Naive thymus-derived CD4-positive, alpha-beta T cell (primary cell): ENCODE measurements at regions of chr3 and their contacts with region 1.

Region 1: DNA sequence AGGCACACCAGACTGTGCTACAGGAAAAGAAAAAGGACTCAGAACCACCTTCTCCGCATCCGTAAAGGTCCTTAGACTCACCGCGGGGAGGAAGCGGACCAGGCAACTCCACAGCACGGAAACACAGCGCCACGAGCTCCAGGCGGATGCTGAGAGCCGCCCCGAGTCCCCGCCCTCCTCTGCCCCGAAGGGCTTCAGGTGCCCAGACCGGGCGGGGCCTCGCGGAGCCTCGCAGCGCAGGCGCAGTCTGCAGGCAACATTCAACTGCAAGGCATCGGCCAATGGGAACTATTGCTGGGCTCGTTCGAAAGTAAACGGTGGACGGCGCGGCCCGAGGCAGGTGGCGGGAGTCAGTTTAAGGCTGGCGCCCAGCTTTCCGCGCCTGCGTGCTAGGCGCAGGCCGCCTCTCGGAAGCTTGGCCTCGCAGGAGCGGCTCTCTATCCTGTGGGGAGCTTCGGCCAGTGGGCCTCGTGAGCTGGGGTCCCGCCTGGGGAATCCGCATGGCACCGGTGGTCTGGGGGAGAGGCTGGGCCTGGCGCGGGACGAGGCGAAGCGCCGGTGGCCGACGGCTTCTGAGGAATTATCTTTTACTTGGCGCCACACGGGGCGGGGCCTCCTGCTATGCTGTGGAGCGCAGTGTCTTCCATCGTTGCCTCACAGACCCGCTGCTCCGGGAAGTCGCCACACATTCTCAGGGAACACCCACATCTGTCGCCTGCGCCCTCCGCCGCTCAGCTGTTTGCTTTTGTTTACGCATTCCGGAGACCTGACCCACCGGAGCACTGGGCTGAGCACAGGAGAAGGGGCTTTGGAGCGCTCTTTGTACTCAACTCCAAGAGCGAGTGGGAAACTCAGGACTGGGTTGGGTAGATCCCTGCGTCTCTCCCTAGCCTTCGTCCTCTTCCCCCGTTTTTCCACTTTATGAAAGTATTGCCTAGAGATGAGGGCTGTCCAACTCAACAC is at the start of gene TRIM59:
- DNase-seq: peak; percentile 90 to 96 (median 93)
- ATAC-seq: peak; percentile 97
- H3K4me3 ChIP-seq: peak within 1 kb of the TSS; percentile 90
- H3K4me3 Mint-ChIP-seq: peak within 1 kb of the TSS; percentile 92 to 100 (median 96)
- H3K27ac ChIP-seq: peak within 1 kb of the TSS; percentile 74
- H3K27ac Mint-ChIP-seq: peak within 1 kb of the TSS; percentile 88 to 96 (median 92)
- H3K4me1 ChIP-seq: peaks cover 10 to 14% of the 10 kb centered on the region in 2 donors
- H3K4me1 Mint-ChIP-seq: peaks cover 8 to 47% (median 40%) of the 10 kb centered on the region in 7 donors
- H3K27me3 ChIP-seq: no peaks in the 10 kb centered on the region
- H3K27me3 Mint-ChIP-seq: peaks cover 0 to 8% (median 0%) of the 10 kb centered on the region in 5 donors
- total RNA-seq, gene TRIM59: 9.8 to 49.2 (median 17.5) TPM

Region 2: DNA sequence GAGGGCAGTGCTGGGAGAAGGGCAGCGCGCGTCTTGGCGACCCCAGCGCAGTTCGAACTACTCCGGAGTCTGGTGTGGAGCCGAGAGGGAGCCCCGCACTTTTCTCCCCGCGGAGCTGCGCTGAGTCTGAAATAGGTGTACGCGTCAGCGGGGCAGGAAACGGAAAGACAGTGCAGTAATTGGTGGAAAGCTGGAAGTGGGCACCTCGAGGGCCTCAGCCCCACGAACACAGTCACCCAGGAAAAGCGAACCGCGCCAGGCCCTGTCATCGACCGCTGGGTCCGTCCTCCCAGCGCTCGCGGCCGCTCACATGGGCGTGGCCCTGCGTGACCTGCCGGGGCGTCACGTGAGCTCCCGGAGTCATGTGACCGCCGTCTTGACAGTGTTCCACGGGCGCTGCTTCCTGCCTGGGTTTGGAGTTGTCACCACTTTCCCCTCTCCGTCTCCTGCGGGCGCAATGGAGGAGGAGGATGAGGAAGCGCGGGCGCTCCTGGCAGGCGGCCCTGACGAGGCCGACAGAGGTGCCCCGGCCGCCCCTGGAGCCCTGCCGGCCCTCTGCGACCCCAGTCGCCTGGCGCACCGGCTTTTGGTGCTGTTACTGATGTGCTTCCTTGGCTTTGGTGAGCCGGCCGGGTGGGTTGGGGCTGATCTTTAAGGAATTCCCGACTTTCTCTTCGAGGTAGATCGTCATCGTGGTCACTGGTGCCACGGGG is 1648.1 kb before region 1 on chr3 and contains the start of gene MFSD1:
- CTCF ChIA-PET with region 1: no interaction called
- POLR2A ChIA-PET with region 1: no interaction called
- intact Hi-C with region 1: loop called in 1 of 2 experiments (anchors 2 kb)
- DNase-seq: peak; percentile 73 to 91 (median 83)
- ATAC-seq: peak; percentile 94
- H3K4me3 ChIP-seq: peak within 1 kb of the TSS; percentile 88
- H3K4me3 Mint-ChIP-seq: peak within 1 kb of the TSS; percentile 84 to 93 (median 90)
- H3K27ac ChIP-seq: peak within 1 kb of the TSS; percentile 76
- H3K27ac Mint-ChIP-seq: peak within 1 kb of the TSS; percentile 58 to 98 (median 92)
- H3K4me1 ChIP-seq: peaks cover 9 to 11% of the 10 kb centered on the region in 2 donors
- H3K4me1 Mint-ChIP-seq: peaks cover 24 to 50% (median 43%) of the 10 kb centered on the region in 7 donors
- H3K27me3 ChIP-seq: no peaks in the 10 kb centered on the region
- H3K27me3 Mint-ChIP-seq: peaks cover 0 to 24% (median 0%) of the 10 kb centered on the region in 5 donors
- total RNA-seq, gene MFSD1: 24.6 to 66.0 (median 31.1) TPM

Region 3: DNA sequence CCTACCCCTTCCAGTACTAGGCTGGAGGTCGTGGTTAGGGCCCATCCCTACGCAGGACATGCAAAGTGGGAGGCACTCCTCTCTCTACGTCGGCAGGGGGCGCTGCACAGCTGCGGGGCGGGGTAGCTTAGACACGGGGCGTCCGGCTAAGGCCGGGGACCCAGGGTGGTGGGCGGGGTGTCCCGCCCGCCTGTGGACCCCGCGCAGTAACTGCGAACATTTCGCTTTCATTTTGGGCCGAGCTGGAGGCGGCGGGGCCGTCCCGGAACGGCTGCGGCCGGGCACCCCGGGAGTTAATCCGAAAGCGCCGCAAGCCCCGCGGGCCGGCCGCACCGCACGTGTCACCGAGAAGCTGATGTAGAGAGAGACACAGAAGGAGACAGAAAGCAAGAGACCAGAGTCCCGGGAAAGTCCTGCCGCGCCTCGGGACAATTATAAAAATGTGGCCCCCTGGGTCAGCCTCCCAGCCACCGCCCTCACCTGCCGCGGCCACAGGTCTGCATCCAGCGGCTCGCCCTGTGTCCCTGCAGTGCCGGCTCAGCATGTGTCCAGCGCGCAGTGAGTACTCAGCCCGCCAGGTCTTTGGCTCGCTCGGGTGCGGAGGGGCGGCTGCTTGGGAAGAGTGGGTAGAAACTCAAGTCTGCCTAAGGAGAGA is 461.2 kb before region 1 on chr3 and contains the start of gene IL12A:
- CTCF ChIA-PET with region 1: no interaction called
- POLR2A ChIA-PET with region 1: no interaction called
- intact Hi-C with region 1: loop called in 1 of 2 experiments (anchors 2 kb)
- DNase-seq: peak; percentile 59 to 85 (median 75)
- ATAC-seq: peak; percentile 98
- H3K4me3 ChIP-seq: peak within 1 kb of the TSS; percentile 56
- H3K4me3 Mint-ChIP-seq: peak within 1 kb of the TSS; percentile 82 to 89 (median 84)
- H3K27ac ChIP-seq: peak within 1 kb of the TSS; percentile 32
- H3K27ac Mint-ChIP-seq: peak within 1 kb of the TSS in 5 of 9 donors; percentile 58 to 65 (median 62)
- H3K4me1 ChIP-seq: peaks cover 6 to 9% of the 10 kb centered on the region in 2 donors
- H3K4me1 Mint-ChIP-seq: peaks cover 6 to 33% (median 15%) of the 10 kb centered on the region in 7 donors
- H3K27me3 ChIP-seq: no peaks in the 10 kb centered on the region
- H3K27me3 Mint-ChIP-seq: peaks cover 0 to 24% (median 10%) of the 10 kb centered on the region in 5 donors
- total RNA-seq, gene IL12A: 0.40 to 1.8 (median 1.3) TPM

Region 4: DNA sequence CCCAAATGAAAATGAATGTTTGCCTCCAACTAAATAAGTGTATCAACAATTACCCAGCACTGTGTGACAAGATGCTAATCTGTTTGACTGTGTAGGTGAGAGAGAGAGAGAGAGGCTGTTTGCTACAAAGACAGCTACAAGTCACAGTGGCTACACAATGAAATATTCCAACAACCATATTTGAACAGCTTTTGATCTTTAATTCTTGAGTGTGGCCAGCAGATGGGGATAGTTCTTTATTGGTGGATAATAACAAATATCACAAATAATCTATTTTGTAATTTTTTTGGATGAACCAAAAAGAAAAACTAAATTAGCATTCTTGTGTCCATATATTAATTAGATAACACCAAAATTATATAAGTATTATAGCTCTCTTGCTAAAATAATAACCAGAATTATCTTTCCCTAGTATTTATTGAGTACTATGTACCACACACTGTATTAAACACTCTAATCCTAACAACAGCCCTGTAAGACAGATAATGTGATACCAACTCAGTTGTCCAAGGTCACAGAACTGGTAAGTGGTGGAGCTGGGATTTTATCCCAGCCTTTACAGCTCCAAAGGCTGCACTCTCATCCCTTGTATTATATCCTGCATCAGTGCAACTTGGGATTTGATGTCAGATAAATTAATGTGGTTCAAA is 286.6 kb before region 1 on chr3:
- CTCF ChIA-PET with region 1: no interaction called
- POLR2A ChIA-PET with region 1: no interaction called
- intact Hi-C with region 1: no loop called
- DNase-seq: peak in 4 of 9 donors; percentile 1 to 19 (median 7)
- ATAC-seq: no peak
- H3K4me3 ChIP-seq: no peak overlapping the region
- H3K4me3 Mint-ChIP-seq: no peak overlapping the region
- H3K27ac ChIP-seq: no peak overlapping the region
- H3K27ac Mint-ChIP-seq: no peak overlapping the region
- H3K4me1 ChIP-seq: no peaks in the 10 kb centered on the region
- H3K4me1 Mint-ChIP-seq: peaks cover 0 to 3% (median 0%) of the 10 kb centered on the region in 7 donors
- H3K27me3 ChIP-seq: no peaks in the 10 kb centered on the region
- H3K27me3 Mint-ChIP-seq: peaks cover 0 to 33% (median 17%) of the 10 kb centered on the region in 5 donors

Region 5: GRCh38 chr3:160434071-160434470 is 15.8 kb before region 1 on chr3:
- CTCF ChIA-PET with region 1: interaction called, 4 read pairs
- POLR2A ChIA-PET with region 1: interaction called, 6 read pairs
- intact Hi-C with region 1: loop called in 1 of 2 experiments (anchors 2 kb)
- DNase-seq: no peak
- ATAC-seq: no peak
- H3K4me3 ChIP-seq: no peak overlapping the region
- H3K4me3 Mint-ChIP-seq: no peak overlapping the region
- H3K27ac ChIP-seq: no peak overlapping the region
- H3K27ac Mint-ChIP-seq: no peak overlapping the region
- H3K4me1 ChIP-seq: peaks cover 0 to 5% of the 10 kb centered on the region in 2 donors
- H3K4me1 Mint-ChIP-seq: peaks cover 20 to 42% (median 33%) of the 10 kb centered on the region in 7 donors
- H3K27me3 ChIP-seq: no peaks in the 10 kb centered on the region
- H3K27me3 Mint-ChIP-seq: no peaks in the 10 kb centered on the region

Region 6: DNA sequence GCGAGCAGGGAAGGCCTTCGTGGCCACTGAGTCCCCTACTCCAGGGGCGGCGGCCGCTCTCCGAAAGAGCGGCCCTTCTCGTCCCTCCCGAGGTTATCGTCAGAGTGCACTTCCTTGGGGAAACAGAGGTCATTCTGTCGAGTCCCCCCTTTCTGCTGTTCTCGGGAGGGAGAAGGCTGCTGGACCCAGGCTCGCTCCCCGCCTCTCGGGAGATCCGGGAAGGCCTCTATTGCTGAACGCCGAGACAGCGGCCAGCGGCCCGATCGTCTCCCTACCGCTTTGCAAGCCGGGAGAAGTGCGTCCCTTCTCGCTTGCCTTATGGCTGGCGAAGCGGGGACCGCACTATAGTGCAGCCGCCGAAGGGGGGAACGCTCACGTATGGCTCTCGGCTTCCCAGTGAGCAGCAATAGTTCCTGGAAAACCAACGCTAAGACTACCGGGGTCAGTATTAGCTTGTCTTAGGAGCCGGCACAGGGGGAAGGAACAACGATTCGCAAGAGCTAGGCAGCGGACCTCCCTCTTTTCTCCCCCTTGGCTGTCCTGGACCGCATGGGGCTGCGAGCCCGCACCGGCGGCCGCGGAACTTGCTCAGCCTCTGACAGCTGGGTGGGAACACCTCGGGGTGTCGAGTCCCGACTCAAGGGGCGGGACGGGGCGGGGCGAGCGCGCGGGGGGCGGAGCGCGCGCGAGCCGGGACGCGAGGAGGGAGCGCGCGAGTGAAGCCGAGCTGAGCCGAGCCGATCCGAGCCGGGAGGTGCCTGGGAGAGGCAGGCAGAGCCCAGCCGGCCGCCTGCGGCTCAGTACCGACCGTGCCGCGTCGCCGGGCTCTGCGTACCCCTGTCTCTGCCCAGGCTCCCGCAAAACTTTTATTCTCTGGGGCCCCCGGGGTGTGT is 305.2 kb after region 1 on chr3:
- CTCF ChIA-PET with region 1: no interaction called
- POLR2A ChIA-PET with region 1: no interaction called
- intact Hi-C with region 1: loop called (anchors 1 to 2 kb)
- DNase-seq: peak; percentile 76 to 88 (median 85)
- ATAC-seq: peak; percentile 92
- H3K4me3 ChIP-seq: peak overlapping the region; percentile 73
- H3K4me3 Mint-ChIP-seq: peak overlapping the region; percentile 88 to 99 (median 96)
- H3K27ac ChIP-seq: peak overlapping the region; percentile 69
- H3K27ac Mint-ChIP-seq: peak overlapping the region; percentile 88 to 97 (median 94)
- H3K4me1 ChIP-seq: peaks cover 10 to 11% of the 10 kb centered on the region in 2 donors
- H3K4me1 Mint-ChIP-seq: peaks cover 27 to 36% (median 30%) of the 10 kb centered on the region in 7 donors
- H3K27me3 ChIP-seq: peaks cover 0 to 6% of the 10 kb centered on the region in 2 donors
- H3K27me3 Mint-ChIP-seq: peaks cover 5 to 41% (median 10%) of the 10 kb centered on the region in 5 donors

Region 7: GRCh38 chr3:161220850-161221753 is 771.2 kb after region 1 on chr3 and contains the start of gene NMD3:
- CTCF ChIA-PET with region 1: no interaction called
- POLR2A ChIA-PET with region 1: no interaction called
- intact Hi-C with region 1: loop called (anchors 2 kb)
- DNase-seq: peak; percentile 84 to 92 (median 89)
- ATAC-seq: peak; percentile 98
- H3K4me3 ChIP-seq: peak within 1 kb of the TSS; percentile 86
- H3K4me3 Mint-ChIP-seq: peak within 1 kb of the TSS; percentile 87 to 96 (median 93)
- H3K27ac ChIP-seq: peak within 1 kb of the TSS; percentile 97
- H3K27ac Mint-ChIP-seq: peak within 1 kb of the TSS; percentile 89 to 98 (median 94)
- H3K4me1 ChIP-seq: peaks cover 18 to 21% of the 10 kb centered on the region in 2 donors
- H3K4me1 Mint-ChIP-seq: peaks cover 12 to 52% (median 36%) of the 10 kb centered on the region in 7 donors
- H3K27me3 ChIP-seq: no peaks in the 10 kb centered on the region
- H3K27me3 Mint-ChIP-seq: peaks cover 4 to 22% (median 11%) of the 10 kb centered on the region in 5 donors
- total RNA-seq, gene NMD3: 37.3 to 52.6 (median 40.7) TPM

Region 8: GRCh38 chr3:161371430-161372326 is 921.8 kb after region 1 on chr3 and contains the start of gene SPTSSB:
- CTCF ChIA-PET with region 1: no interaction called
- POLR2A ChIA-PET with region 1: no interaction called
- intact Hi-C with region 1: loop called in 1 of 2 experiments (anchors 10 kb)
- DNase-seq: peak; percentile 21 to 57 (median 43)
- ATAC-seq: peak; percentile 75
- H3K4me3 ChIP-seq: peak within 1 kb of the TSS; percentile 68
- H3K4me3 Mint-ChIP-seq: peak within 1 kb of the TSS; percentile 79 to 93 (median 88)
- H3K27ac ChIP-seq: no peak within 1 kb of the TSS
- H3K27ac Mint-ChIP-seq: peak within 1 kb of the TSS in 3 of 9 donors; percentile 46 to 64 (median 57)
- H3K4me1 ChIP-seq: peaks cover 7% of the 10 kb centered on the region in 2 donors
- H3K4me1 Mint-ChIP-seq: peaks cover 7 to 21% (median 18%) of the 10 kb centered on the region in 7 donors
- H3K27me3 ChIP-seq: peaks cover 0 to 15% of the 10 kb centered on the region in 2 donors
- H3K27me3 Mint-ChIP-seq: peaks cover 6 to 84% (median 22%) of the 10 kb centered on the region in 5 donors
- total RNA-seq, gene SPTSSB: 0.34 to 1.6 TPM in 2 of 5 experiments, not detected in the others